Head of caudate nucleus (tissue), 42 donors: ENCODE measurements at regions of chr11 and their contacts with region 1.

Region 1: GRCh38 chr11:46537537-46538295 is 56.1 kb downstream of the AMBRA1 start:
- DNase-seq: peak; percentile 24 to 84 (median 70)

Region 2: DNA sequence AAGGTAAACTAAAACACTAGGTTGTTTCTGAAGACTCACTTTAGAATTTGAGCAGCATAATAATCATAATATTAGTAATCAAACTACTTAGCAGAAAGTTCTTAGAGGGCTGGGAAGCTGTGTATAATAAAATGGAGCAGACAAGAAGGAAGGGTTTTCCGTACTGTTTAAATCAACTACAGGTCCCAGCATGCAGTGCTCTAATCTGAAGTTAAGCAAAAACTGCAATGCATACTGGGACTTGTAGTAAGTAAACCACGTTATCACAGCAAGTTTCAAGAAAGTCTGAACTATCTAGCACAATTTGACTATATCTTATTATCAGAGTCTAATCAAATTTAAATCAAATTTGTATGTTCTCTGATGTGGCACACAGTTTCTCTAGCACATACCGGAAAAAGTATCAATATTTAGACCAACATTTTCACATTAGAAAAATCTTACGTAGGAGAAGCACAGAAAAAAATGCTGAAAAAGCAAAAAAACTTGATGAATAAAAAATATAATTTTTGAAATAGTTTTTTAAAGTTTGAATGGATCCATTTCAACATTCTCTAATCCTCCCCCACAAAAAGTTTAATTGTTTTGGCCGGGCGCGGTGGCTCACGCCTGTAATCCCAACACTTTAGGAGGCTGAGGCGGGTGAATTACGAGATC is 424.6 kb before region 1 on chr11:
- intact Hi-C with region 1: no loop called
- DNase-seq: peak in 11 of 42 donors; percentile 16 to 69 (median 38)

Region 3: DNA sequence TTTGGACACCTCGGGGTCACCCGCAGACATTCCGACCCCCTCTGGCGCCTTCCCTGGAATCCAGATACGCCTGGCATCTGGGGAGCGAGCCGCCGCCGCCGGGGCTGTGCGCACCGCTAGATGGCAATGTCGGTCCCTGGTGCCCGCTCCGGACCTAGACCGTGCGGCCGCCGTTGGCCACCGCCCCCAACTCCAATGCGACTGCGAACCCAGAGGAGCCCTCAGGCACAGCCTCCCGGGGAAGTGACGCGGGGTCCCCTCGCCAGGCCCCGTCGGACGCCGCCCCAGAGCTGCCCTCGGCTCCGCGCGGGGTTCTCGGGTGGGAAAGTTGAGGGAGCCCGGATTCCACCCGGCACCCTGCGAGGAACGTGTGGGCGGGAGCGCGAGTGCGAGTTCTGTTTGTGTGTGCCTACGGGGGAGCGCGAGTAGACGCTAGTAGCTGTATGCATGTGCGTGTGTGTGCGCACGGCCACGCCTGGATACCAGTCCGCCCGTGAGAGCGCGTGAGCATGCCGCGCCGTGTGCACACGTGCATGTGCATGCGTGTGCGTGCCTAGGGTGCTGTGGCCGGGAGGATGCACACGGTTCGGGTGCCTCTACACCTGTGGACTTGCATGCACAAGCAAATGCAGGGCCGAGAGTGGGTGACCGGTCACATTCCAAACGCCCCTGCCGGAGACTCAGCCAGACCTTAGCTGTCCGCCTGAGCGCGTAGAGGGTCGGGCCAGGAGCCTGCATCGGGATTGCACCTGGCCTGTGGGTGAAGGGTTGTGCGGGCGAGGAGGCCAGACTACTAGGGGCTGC is 148.1 kb before region 1 on chr11:
- intact Hi-C with region 1: loop called (anchors 2 kb)
- DNase-seq: peak; percentile 53 to 90 (median 78)

Region 4: DNA sequence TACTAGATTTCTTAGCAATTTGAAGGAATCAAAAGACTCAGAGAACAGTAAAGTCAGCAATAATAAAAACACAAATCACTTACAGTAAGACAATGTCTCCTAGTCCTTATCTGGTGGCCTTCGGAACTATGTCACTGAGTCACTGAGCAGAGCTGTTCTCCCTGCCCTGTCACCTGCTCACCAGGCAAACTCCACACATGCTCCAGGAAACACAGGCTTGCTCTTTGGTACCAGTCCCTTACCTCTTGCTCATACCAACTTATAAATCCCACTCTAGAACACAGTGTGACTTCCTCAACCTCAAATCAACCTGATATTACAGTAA is 65.1 kb before region 1 on chr11:
- intact Hi-C with region 1: no loop called
- DNase-seq: no peak